Ovary (tissue), 10 donors: ENCODE measurements at regions of chr1 and their contacts with region 1.

Region 1: DNA sequence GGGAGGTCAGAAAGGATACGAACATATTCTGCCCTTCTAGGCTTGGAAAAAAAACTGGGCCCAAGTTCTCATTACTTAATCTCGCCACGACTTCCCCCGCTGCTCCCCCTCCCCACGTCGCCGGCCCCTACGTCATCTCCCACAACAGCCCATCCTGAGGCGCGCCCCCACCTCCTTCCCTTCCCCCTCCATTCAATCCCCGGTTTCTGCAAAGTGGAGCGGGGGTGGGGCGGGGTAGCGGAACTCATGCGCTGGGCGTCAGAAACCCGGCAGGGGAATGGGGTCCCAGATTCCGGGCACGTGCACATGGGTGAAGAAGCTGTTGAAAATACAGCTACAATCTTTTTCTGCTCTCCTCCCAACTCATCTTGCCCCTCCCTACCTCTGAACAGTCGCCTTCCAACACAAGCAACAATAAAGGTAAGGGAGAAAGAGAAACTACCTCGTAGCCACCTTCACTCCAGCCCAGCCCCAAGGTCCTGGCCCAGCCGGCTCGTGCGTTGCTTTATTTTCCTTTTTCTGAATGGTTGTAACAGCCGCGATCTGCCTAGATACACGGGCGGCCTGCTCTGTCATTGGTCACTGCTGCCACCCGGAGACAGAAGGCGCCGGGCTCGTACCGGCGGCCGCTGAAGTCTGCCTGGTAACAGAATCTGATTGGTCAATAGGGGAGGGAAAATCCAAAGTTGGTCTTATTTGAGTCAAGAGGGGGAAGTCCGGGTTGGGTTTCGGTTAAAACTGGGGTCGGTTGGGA is at the start of gene RFX5:
- DNase-seq: peak; percentile 87 to 93 (median 87)
- H3K4me3 ChIP-seq: peak within 1 kb of the TSS; percentile 44
- H3K27ac ChIP-seq: peak within 1 kb of the TSS; percentile 30 to 84
- H3K4me1 ChIP-seq: peaks cover 2% of the 10 kb centered on the region
- H3K27me3 ChIP-seq: no peaks in the 10 kb centered on the region
- CTCF ChIP-seq: peak in 2 of 3 donors; percentile 15 to 20
- EP300 ChIP-seq: no peak
- POLR2A ChIP-seq: peak; percentile 68
- total RNA-seq, gene RFX5: 11.8 to 27.9 (median 22.6) TPM

Region 2: DNA sequence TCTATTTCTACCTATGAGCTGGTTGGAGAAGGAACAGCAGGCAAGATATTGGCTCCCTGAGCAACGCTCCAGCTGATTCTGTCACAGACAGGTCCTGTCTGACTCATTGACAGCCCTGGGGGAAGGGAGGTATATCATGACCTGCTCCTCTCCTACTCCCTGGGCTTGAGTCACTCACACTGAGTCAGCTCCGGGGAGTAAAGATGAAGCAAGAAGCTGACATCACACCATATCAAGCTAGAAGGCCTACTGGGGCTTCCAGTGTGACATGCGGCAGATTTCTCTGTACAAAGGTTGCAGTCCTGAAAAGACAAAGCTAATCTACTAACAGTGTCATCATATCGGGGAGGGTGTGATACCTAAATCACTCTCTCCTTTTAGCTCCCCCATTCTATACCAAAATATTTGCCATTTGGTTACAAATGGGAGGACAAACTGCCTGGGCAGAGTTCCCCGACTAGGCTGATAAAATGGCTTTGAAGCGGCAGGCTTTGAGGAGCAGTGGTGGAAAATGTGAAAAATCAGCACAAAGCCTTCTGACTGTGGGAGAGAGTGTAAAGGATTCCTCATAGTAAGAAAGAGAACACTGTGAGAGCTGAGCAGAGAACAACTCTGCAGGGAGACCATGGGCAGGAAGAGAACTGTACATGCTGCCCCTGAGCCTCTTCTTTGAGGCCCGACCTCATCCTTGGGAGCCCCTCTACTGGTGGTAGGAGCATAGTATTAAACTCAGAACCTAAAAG is 35.2 kb before region 1 on chr1:
- intact Hi-C with region 1: no loop called
- DNase-seq: peak; percentile 62 to 91 (median 75)
- H3K4me3 ChIP-seq: no peak overlapping the region
- H3K27ac ChIP-seq: peak overlapping the region; percentile 49 to 69
- H3K4me1 ChIP-seq: peaks cover 29% of the 10 kb centered on the region
- H3K27me3 ChIP-seq: no peaks in the 10 kb centered on the region
- CTCF ChIP-seq: no peak
- EP300 ChIP-seq: peak; percentile 39
- POLR2A ChIP-seq: peak; percentile 22

Region 3: DNA sequence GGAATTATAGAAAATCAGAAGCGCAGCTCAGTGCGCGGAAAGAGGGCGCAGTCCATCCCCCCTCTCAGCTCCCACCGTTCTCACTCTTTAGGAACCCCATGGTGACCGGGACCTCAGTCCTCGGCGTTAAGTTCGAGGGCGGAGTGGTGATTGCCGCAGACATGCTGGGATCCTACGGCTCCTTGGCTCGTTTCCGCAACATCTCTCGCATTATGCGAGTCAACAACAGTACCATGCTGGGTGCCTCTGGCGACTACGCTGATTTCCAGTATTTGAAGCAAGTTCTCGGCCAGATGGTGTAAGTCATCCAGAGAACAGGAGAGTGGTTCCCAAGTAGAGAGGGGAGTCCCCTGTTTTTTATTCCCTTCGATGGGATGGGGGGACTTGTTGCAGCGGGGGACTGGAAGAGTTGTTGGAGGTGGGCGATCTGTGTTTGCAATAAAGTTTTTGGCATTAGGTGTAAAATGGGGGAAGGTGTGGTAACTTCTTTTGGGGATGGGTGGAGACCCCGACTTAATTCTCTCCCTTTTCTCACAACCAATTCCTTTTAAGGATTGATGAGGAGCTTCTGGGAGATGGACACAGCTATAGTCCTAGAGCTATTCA is 53.0 kb after region 1 on chr1:
- intact Hi-C with region 1: loop called in 1 of 4 experiments (anchors 5 kb)
- DNase-seq: peak in 3 of 5 donors; percentile 25 to 51 (median 32)
- H3K4me3 ChIP-seq: peak overlapping the region; percentile 88
- H3K27ac ChIP-seq: peak overlapping the region; percentile 58 to 81
- H3K4me1 ChIP-seq: peaks cover 4% of the 10 kb centered on the region
- H3K27me3 ChIP-seq: no peaks in the 10 kb centered on the region
- CTCF ChIP-seq: no peak
- EP300 ChIP-seq: no peak
- POLR2A ChIP-seq: no peak